CD4-positive, alpha-beta T cell (primary cell): ENCODE measurements at regions of chr5 and their contacts with region 1.

Region 1: DNA sequence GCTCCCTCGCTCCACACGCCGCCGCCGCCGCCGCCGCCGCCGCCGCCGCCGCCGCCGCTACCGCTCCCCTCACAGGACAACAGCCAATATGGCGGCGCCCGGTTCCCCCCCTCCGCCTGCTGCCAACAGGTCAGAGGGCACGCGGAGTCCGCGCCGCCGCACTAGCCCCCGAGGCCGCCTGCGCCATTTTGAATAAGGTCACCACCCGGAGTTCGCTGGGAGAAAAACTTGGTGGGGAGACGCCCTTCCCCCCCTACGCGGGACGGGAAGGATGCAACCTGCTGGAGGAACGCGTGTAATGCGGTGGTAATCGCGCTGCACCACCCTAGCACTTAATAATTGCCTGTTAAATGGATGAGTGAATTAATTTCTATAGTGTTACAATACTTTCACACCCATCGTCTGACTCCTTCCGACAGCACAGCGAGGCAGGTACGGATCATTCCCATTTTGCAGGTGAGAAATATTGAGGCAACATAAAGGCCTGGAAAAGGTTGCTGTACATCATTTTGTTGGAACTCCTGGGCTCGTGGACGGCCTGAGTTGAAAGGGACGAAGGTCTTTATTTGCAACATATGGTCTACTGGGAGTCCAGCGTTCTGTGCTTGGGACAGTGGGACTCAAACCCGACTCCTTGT is at the start of gene FAM193B:
- DNase-seq: peak; percentile 93 to 97 (median 95)
- ATAC-seq: peak; percentile 99
- H3K4me3 ChIP-seq: peak within 1 kb of the TSS; percentile 81
- H3K4me3 Mint-ChIP-seq: peak within 1 kb of the TSS; percentile 96
- H3K27ac ChIP-seq: no peak within 1 kb of the TSS
- H3K27ac Mint-ChIP-seq: peak within 1 kb of the TSS; percentile 71
- H3K4me1 ChIP-seq: peaks cover 30% of the 10 kb centered on the region
- H3K4me1 Mint-ChIP-seq: peaks cover 44% of the 10 kb centered on the region
- H3K27me3 ChIP-seq: no peaks in the 10 kb centered on the region
- H3K27me3 Mint-ChIP-seq: no peaks in the 10 kb centered on the region
- CTCF ChIP-seq: no peak
- total RNA-seq, gene FAM193B: 150 to 155 TPM

Region 2: GRCh38 chr5:176388444-176389134 is 1166.0 kb before region 1 on chr5 and contains the starts of genes HIGD2A and NOP16:
- CTCF ChIA-PET with region 1: no interaction called
- POLR2A ChIA-PET with region 1: no interaction called
- intact Hi-C with region 1: loop called in 1 of 2 experiments (anchors 5 kb)
- DNase-seq: peak; percentile 96 to 100 (median 99)
- ATAC-seq: peak; percentile 87
- H3K4me3 ChIP-seq: peak within 1 kb of the TSS; percentile 79
- H3K4me3 Mint-ChIP-seq: peak within 1 kb of the TSS; percentile 98
- H3K27ac ChIP-seq: peak within 1 kb of the TSS; percentile 87 to 95
- H3K27ac Mint-ChIP-seq: peak within 1 kb of the TSS; percentile 97
- H3K4me1 ChIP-seq: peaks cover 33% of the 10 kb centered on the region
- H3K4me1 Mint-ChIP-seq: peaks cover 38% of the 10 kb centered on the region
- H3K27me3 ChIP-seq: no peaks in the 10 kb centered on the region
- H3K27me3 Mint-ChIP-seq: no peaks in the 10 kb centered on the region
- CTCF ChIP-seq: no peak
- total RNA-seq, gene HIGD2A: 98.2 to 104 TPM
- total RNA-seq, gene NOP16: 12.0 to 14.5 TPM

Region 3: DNA sequence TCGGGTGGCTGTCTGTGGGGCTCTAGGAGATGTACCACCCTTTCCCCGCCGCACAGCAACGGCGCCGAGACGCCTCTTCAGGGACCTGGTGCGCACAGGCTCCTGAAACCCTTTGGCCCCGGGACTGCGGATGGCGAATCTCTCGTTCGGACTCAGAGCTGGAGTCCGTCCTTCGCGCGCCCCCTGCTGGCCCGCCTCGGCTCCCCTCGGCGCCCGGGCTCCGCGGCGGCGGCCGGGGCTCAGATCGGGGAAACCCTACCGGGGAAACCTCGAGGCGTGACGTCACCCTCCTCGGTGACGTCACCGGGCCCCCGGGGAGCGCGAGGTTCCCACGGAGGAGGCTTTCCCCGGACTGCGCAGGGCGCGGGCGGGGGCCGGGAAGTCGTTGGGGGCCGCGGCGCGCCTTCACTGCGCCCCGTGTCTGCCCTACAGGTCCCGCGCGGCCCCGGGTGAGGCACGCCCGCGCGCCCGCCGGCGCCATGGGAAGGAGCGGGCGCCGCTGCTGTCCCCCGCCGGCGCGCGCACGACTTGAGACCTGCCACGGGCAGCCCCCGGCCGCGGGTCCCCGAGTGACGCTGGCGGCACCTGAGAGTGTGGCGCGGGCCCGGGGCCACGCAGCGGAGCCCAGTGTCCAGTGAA is 100.1 kb before region 1 on chr5:
- CTCF ChIA-PET with region 1: no interaction called
- POLR2A ChIA-PET with region 1: no interaction called
- intact Hi-C with region 1: no loop called
- DNase-seq: peak; percentile 87 to 97 (median 94)
- ATAC-seq: peak; percentile 45
- H3K4me3 ChIP-seq: peak overlapping the region; percentile 71
- H3K4me3 Mint-ChIP-seq: peak overlapping the region; percentile 89
- H3K27ac ChIP-seq: peak overlapping the region; percentile 90 to 95
- H3K27ac Mint-ChIP-seq: peak overlapping the region; percentile 93
- H3K4me1 ChIP-seq: peaks cover 52% of the 10 kb centered on the region
- H3K4me1 Mint-ChIP-seq: peaks cover 43% of the 10 kb centered on the region
- H3K27me3 ChIP-seq: no peaks in the 10 kb centered on the region
- H3K27me3 Mint-ChIP-seq: no peaks in the 10 kb centered on the region
- CTCF ChIP-seq: peak; percentile 79

Region 4: GRCh38 chr5:177473461-177474001 is 81.1 kb before region 1 on chr5 and contains the start of gene DBN1:
- CTCF ChIA-PET with region 1: no interaction called
- POLR2A ChIA-PET with region 1: no interaction called
- intact Hi-C with region 1: no loop called
- DNase-seq: peak in 3 of 14 experiments; percentile 33 to 41 (median 40)
- ATAC-seq: peak; percentile 61
- H3K4me3 ChIP-seq: peak within 1 kb of the TSS; percentile 45
- H3K4me3 Mint-ChIP-seq: peak within 1 kb of the TSS; percentile 90
- H3K27ac ChIP-seq: no peak within 1 kb of the TSS
- H3K27ac Mint-ChIP-seq: peak within 1 kb of the TSS; percentile 64
- H3K4me1 ChIP-seq: peaks cover 36% of the 10 kb centered on the region
- H3K4me1 Mint-ChIP-seq: peaks cover 22% of the 10 kb centered on the region
- H3K27me3 ChIP-seq: peaks cover 0 to 5% of the 10 kb centered on the region in 2 experiments
- H3K27me3 Mint-ChIP-seq: peaks cover 6% of the 10 kb centered on the region
- CTCF ChIP-seq: no peak
- total RNA-seq, gene DBN1: 1.8 to 2.5 TPM

Region 5: GRCh38 chr5:177516604-177517568 is 37.7 kb before region 1 on chr5 and contains the start of gene DDX41:
- CTCF ChIA-PET with region 1: no interaction called
- POLR2A ChIA-PET with region 1: interaction called, 4 read pairs
- intact Hi-C with region 1: loop called in 1 of 2 experiments (anchors 2 kb)
- DNase-seq: peak; percentile 88 to 98 (median 94)
- ATAC-seq: peak; percentile 90
- H3K4me3 ChIP-seq: peak within 1 kb of the TSS; percentile 72
- H3K4me3 Mint-ChIP-seq: peak within 1 kb of the TSS; percentile 93
- H3K27ac ChIP-seq: peak within 1 kb of the TSS; percentile 36 to 54
- H3K27ac Mint-ChIP-seq: peak within 1 kb of the TSS; percentile 84
- H3K4me1 ChIP-seq: peaks cover 51% of the 10 kb centered on the region
- H3K4me1 Mint-ChIP-seq: peaks cover 43% of the 10 kb centered on the region
- H3K27me3 ChIP-seq: no peaks in the 10 kb centered on the region
- H3K27me3 Mint-ChIP-seq: no peaks in the 10 kb centered on the region
- CTCF ChIP-seq: no peak
- total RNA-seq, gene DDX41: 49.6 to 49.7 TPM

Region 6: GRCh38 chr5:177592010-177592834 is 37.6 kb after region 1 on chr5 and contains the start of gene TMED9:
- CTCF ChIA-PET with region 1: no interaction called
- POLR2A ChIA-PET with region 1: no interaction called
- intact Hi-C with region 1: loop called in 1 of 2 experiments (anchors 2 kb)
- DNase-seq: peak; percentile 77 to 94 (median 86)
- ATAC-seq: peak; percentile 99
- H3K4me3 ChIP-seq: peak within 1 kb of the TSS; percentile 71
- H3K4me3 Mint-ChIP-seq: peak within 1 kb of the TSS; percentile 100
- H3K27ac ChIP-seq: peak within 1 kb of the TSS; percentile 64 to 69
- H3K27ac Mint-ChIP-seq: peak within 1 kb of the TSS; percentile 87
- H3K4me1 ChIP-seq: peaks cover 32% of the 10 kb centered on the region
- H3K4me1 Mint-ChIP-seq: peaks cover 31% of the 10 kb centered on the region
- H3K27me3 ChIP-seq: no peaks in the 10 kb centered on the region
- H3K27me3 Mint-ChIP-seq: peaks cover 24% of the 10 kb centered on the region
- CTCF ChIP-seq: no peak
- total RNA-seq, gene TMED9: 42.7 to 47.8 TPM

Region 7: DNA sequence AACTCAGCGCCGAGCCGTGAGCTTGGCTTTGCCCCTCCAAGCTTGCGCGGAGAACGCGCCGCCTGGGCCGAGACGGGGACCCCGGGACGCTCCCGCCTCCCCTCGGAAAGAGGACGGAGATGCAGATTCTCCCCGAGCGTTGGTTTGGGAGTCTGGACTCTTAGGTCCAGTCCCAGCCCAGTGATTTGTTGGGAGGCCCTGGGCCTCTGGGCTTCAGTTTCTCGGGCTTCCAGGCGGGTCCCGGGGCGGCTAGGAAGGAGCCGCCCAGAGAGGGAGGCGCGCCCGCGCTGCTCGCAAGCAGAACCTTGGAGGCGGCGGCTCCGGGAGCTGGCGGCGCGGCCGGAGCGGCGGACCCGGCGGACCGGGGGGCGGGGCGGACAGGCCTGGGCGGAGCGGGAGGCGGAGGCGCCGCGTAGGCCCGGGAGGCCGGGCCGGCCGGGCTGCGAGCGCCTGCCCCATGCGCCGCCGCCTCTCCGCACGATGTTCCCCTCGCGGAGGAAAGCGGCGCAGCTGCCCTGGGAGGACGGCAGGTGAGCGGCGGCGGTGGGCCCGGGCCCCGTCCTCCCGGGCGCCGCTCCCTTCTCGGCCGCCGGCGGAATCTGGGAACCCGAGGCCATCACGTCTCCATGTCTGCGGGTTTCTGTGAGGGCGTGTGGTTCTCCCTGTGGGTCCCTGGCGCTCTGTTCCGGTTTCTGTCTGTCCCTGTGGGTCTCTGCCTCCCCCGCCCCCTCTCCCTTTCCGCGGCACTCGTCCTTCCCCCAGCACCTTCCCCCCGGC is 45.3 kb after region 1 on chr5 and contains the start of gene B4GALT7:
- CTCF ChIA-PET with region 1: no interaction called
- POLR2A ChIA-PET with region 1: no interaction called
- intact Hi-C with region 1: loop called in 1 of 2 experiments (anchors 2 kb)
- DNase-seq: peak; percentile 59 to 93 (median 85)
- ATAC-seq: peak; percentile 89
- H3K4me3 ChIP-seq: peak within 1 kb of the TSS; percentile 96
- H3K4me3 Mint-ChIP-seq: peak within 1 kb of the TSS; percentile 97
- H3K27ac ChIP-seq: peak within 1 kb of the TSS; percentile 56 to 73
- H3K27ac Mint-ChIP-seq: peak within 1 kb of the TSS; percentile 85
- H3K4me1 ChIP-seq: peaks cover 27% of the 10 kb centered on the region
- H3K4me1 Mint-ChIP-seq: peaks cover 31% of the 10 kb centered on the region
- H3K27me3 ChIP-seq: no peaks in the 10 kb centered on the region
- H3K27me3 Mint-ChIP-seq: no peaks in the 10 kb centered on the region
- CTCF ChIP-seq: no peak
- total RNA-seq, gene B4GALT7: 31.1 to 33.8 TPM

Region 8: DNA sequence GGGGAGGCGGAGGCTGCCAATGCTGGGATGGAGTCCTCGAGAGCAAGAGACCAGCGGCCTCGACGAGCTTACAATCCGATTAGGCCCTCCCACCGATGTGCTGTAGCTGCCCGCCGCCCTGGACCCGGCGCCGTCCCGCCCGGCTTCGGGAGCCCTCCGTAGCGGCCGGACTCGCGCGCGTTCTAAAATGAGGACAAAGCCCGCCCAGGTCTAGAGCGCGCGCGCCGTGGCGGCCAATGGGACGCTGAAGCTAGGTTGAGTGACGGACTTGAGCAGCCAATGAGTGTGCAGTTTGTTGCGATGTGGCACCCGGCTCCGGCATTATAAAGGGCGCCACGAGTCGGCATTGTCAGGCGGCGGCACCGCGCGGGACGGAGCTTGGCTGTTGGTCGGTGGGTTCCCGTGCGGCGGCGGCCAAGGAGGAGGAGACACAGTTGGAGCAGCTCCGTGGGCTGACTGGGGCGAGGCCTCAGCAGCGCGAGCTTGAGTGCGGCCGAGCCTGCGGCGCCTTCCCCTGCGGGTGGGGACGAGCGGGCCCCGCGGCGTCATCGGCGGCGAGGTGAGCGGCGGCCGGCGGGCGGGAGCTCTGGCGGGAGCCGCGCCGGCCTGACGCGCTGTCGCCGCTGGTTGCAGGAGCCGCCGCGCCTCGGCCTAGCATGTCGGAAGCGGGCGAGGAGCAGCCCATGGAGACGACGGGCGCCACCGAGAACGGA is 649.7 kb after region 1 on chr5 and contains the start of gene HNRNPAB:
- CTCF ChIA-PET with region 1: no interaction called
- POLR2A ChIA-PET with region 1: no interaction called
- intact Hi-C with region 1: loop called in 1 of 2 experiments (anchors 5 kb)
- DNase-seq: peak; percentile 93 to 99 (median 97)
- ATAC-seq: peak; percentile 81
- H3K4me3 ChIP-seq: peak within 1 kb of the TSS; percentile 97
- H3K4me3 Mint-ChIP-seq: peak within 1 kb of the TSS; percentile 100
- H3K27ac ChIP-seq: peak within 1 kb of the TSS; percentile 29 to 62
- H3K27ac Mint-ChIP-seq: peak within 1 kb of the TSS; percentile 93
- H3K4me1 ChIP-seq: peaks cover 35% of the 10 kb centered on the region
- H3K4me1 Mint-ChIP-seq: peaks cover 40% of the 10 kb centered on the region
- H3K27me3 ChIP-seq: no peaks in the 10 kb centered on the region
- H3K27me3 Mint-ChIP-seq: peaks cover 4% of the 10 kb centered on the region
- CTCF ChIP-seq: no peak
- total RNA-seq, gene HNRNPAB: 63.6 to 68.9 TPM

Region 9: DNA sequence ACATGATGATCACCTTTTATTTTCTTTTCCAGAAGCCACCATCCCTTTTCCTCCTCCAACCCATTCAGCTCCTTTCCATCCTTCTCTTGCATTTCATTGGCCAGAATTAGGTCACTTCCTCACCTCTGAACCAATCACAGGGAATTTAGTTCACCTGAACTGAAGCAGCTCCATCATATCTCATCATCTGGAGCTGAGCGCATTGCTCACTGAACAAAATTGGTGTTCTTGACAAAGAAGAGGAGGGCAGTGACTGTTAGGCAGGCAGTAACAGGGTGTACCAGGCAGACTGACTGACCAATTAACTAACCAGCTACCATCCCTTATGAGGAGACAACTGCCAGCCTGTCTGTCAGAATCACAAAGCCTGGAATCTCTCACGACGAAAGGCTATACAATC is 1177.7 kb after region 1 on chr5:
- CTCF ChIA-PET with region 1: no interaction called
- POLR2A ChIA-PET with region 1: no interaction called
- intact Hi-C with region 1: no loop called
- DNase-seq: no peak
- ATAC-seq: no peak
- H3K4me3 ChIP-seq: no peak overlapping the region
- H3K4me3 Mint-ChIP-seq: peak overlapping the region; percentile 48
- H3K27ac ChIP-seq: no peak overlapping the region
- H3K27ac Mint-ChIP-seq: no peak overlapping the region
- H3K4me1 ChIP-seq: peaks cover 14% of the 10 kb centered on the region
- H3K4me1 Mint-ChIP-seq: peaks cover 8% of the 10 kb centered on the region
- H3K27me3 ChIP-seq: no peaks in the 10 kb centered on the region
- H3K27me3 Mint-ChIP-seq: no peaks in the 10 kb centered on the region
- CTCF ChIP-seq: no peak